ENCODE measurements at regions of chr11 and their contacts with region 1.

Region 1: DNA sequence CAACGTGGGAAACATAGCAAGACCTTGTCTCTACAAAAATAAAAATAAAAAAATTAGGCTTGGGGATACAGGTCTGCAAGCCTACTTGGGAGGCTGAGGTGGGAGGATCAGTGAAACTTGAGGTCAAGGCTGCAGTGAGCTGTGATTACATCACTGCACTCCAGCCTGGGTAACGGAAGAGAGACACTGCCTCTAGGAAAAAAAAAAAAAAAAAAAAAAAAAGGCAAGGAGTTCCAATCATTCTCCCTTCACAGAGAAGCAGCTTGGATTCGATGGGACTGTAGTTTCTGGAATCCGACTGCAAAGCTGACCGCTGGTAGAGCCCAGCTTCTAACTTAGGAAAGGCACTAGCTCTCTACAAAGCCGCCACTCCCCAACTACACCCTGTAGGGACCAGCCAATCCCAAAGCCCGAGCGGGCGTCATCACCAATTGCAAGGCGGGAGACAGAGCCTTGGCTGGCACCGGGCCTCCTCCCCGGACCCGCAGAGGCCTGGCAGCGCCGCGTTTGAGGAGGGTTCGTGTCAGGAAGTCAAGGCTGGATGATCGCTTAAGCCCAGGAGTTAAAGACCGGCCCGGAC is 699 bp upstream of the DDB2 start:
- DNase-seq: peak; percentile 96
- ATAC-seq: peak; percentile 94

Region 2: DNA sequence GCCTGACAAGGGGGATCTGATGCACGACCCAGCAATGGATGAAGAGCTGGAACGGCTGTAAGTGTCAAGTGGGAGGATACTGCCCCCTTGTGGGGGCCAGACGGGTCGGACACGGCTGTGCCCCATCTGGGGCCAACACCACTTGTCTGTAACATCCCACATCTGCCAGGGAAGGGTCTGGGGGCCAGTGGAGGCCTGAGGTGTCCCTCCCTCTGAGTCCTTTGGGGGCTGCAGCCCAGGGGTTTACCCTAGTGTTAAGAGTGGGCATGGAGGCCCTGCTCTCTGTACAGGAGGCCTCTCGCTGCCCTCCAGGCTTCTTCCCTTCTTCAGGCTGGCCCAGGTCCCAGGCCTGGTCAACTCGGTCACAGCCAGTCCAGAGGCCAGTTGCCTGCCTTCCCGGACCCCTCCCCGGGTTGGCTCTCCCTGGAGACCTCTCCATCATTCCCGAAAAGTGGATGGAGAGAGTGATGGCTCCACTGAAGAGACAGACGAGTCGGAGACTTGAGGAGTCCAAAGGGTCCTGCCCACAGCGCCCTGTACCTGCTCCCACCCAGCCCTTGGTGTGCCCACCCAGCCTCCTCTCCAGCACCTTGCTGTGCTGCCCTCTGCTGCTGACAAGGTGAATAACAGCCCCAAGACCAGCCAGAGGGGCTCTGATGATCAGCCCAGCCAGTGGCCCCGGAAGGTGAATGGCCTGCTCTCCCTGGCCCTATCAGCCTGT is 52.8 kb before region 1 on chr11:
- intact Hi-C with region 1: no loop called
- DNase-seq: no peak
- ATAC-seq: peak; percentile 65

Region 3: DNA sequence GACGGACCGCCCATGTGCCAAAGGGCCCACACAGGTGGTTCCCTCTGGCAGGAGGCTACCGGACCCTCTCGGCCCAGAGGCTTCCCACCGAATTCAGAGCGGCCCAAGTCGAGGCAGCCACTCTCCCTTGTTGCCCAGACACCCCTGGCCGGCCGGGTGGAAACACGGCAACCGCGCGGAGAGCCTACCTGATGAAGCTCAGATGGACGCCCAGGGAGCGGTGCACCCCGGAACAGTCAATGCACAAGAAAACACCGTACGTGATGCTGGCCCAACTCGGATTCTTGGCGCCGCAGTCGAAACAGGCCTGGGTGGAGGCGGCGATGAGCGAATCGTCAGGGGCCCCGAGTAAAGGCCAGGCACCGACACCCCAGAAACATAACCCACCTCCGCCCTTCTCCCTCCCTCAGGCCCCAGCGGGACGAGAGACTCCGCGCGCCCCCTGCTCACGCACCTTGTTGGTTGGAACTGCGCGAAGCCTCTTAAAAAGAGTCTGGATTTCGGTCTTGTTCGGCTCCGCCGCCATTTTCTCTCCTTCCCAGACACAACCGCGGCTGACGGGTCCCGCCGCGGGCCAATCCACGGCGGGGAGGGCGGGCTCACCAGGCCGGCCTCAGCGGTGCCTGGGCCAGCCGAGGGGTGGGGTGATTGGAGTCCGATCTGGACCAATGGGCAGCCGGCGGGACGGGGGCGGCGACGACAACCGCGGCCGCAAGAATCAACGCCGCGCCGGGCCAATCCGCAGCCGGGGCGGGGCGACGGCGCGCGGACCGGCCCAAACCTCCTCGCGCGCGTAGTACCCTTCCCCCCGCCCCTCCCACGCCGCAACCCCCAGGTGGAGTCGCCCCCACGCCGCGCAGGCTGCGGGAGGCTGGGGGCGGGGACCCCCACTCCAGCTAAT is 37.5 kb before region 1 on chr11 and contains the start of gene ARFGAP2:
- intact Hi-C with region 1: loop called (anchors 5 kb)
- DNase-seq: peak; percentile 99
- ATAC-seq: peak; percentile 94
- total RNA-seq, gene ARFGAP2: 45.8 TPM

Region 4: DNA sequence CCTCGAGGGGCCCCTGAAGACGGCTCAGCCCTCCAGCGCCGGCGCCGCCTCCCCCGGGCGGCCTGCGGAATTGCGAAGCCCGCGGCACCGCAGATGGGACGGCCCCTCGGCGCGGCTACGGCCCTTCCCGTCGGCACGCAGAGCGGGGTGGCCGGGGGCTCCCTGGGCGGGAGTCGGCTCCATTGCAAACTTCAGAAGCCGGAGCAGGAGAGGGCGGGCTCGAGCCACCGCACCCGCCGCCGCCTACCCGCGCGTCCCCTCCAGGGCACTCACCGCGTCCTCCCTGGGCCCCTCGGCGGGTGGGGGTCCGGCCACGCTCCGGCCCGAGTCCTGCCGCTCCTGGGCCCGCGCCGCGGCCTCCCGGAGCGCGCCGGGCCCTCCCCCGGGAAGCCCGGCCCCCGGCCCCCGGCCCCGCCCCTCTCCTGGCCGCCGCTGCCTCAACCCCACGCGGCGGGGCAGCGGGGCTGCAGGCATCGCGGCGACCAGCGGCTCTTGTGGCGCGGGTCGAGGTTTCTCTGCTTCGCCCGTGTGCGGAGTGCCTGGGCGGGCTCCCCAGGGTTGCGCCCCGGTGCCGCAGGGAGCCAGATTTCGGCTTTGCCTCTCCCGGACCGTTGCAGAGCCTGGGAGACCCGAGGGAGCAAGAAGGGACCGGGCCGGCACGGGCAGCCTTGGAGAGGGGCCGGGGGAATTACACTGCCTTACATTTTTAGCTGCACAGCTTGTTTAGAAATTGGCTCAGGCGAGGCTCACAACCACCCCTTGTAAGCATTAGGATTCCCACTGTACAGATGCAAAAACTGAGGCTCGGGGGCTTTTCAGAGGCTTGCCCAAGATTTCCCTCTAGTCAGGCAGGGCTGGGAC is 27.8 kb before region 1 on chr11 and contains the start of gene PACSIN3:
- intact Hi-C with region 1: loop called (anchors 2 kb)
- DNase-seq: peak; percentile 81
- ATAC-seq: peak; percentile 56
- total RNA-seq, gene PACSIN3: 177 TPM

Region 5: GRCh38 chr11:47259178-47259977 is 45.3 kb after region 1 on chr11:
- intact Hi-C with region 1: loop called (anchors 5 kb)
- DNase-seq: no peak
- ATAC-seq: no peak

Region 6: GRCh38 chr11:47355283-47356128 is 141.4 kb after region 1 on chr11:
- intact Hi-C with region 1: no loop called
- DNase-seq: peak; percentile 95
- ATAC-seq: peak; percentile 58

Measured in Right ventricle myocardium inferior (tissue), 1 donor.